CD14-positive monocyte (primary cell): ENCODE measurements at regions of chr1 and their contacts with region 1.

Region 1: GRCh38 chr1:58783993-58784757 is at the start of gene JUN:
- DNase-seq: peak; percentile 99
- H3K4me3 ChIP-seq: peak within 1 kb of the TSS; percentile 80 to 93 (median 85)
- H3K4me3 Mint-ChIP-seq: peak within 1 kb of the TSS; percentile 96 to 99
- H3K27ac ChIP-seq: peak within 1 kb of the TSS; percentile 89 to 97
- H3K27ac Mint-ChIP-seq: peak within 1 kb of the TSS; percentile 95 to 99 (median 97)
- H3K4me1 ChIP-seq: peaks cover 28 to 33% of the 10 kb centered on the region in 2 donors
- H3K4me1 Mint-ChIP-seq: peaks cover 23% of the 10 kb centered on the region
- H3K27me3 ChIP-seq: peaks cover 0 to 58% of the 10 kb centered on the region in 2 donors
- H3K27me3 Mint-ChIP-seq: peaks cover 38 to 72% (median 57%) of the 10 kb centered on the region in 3 donors
- CTCF ChIP-seq: no peak
- polyA plus RNA-seq, gene JUN: 29.3 to 330 (median 31.3) TPM

Region 2: DNA sequence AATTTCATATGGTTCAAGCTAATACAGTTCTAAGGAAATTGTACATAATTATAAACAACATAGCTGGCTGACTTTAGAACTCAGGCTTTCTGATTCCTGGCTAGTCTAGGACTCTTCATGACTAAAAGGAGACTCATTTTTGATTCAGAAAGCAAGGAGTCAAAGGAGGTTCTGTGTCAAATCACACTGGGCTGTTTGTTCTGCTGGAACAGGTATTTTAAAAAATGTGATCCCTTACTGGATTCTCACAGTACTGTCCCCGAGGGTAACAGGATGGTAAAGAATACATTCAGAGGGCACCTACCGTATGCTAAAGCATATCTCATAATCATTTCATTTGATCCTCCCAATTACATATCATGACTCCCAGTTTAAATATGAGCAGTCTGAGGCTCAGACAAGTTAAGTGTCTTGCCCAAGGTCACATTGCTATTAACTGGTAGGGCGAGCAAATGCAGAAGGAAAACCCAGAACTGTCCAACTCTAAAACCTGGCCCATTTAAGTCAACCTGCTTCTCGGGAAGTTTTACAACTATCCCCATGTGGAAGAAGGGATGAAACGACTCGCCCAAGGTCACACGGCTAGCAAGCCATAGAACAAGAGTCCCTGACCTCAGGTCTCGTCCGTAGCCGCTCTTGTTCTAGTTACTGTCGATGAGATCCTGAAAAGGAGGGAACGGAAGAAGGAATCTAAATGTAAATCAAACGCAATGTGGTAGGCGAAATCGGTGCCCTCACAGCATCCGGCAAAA is 85.0 kb before region 1 on chr1:
- intact Hi-C with region 1: loop called in 1 of 2 experiments (anchors 10 kb)
- DNase-seq: peak in 2 of 3 donors; percentile 16 to 22
- H3K4me3 ChIP-seq: peak overlapping the region; percentile 81 to 95 (median 92)
- H3K4me3 Mint-ChIP-seq: peak overlapping the region; percentile 96 to 99
- H3K27ac ChIP-seq: peak overlapping the region; percentile 74 to 98
- H3K27ac Mint-ChIP-seq: peak overlapping the region; percentile 93 to 100 (median 99)
- H3K4me1 ChIP-seq: peaks cover 11 to 14% of the 10 kb centered on the region in 2 donors
- H3K4me1 Mint-ChIP-seq: peaks cover 13% of the 10 kb centered on the region
- H3K27me3 ChIP-seq: no peaks in the 10 kb centered on the region
- H3K27me3 Mint-ChIP-seq: peaks cover 0 to 5% (median 0%) of the 10 kb centered on the region in 3 donors
- CTCF ChIP-seq: no peak

Region 3: DNA sequence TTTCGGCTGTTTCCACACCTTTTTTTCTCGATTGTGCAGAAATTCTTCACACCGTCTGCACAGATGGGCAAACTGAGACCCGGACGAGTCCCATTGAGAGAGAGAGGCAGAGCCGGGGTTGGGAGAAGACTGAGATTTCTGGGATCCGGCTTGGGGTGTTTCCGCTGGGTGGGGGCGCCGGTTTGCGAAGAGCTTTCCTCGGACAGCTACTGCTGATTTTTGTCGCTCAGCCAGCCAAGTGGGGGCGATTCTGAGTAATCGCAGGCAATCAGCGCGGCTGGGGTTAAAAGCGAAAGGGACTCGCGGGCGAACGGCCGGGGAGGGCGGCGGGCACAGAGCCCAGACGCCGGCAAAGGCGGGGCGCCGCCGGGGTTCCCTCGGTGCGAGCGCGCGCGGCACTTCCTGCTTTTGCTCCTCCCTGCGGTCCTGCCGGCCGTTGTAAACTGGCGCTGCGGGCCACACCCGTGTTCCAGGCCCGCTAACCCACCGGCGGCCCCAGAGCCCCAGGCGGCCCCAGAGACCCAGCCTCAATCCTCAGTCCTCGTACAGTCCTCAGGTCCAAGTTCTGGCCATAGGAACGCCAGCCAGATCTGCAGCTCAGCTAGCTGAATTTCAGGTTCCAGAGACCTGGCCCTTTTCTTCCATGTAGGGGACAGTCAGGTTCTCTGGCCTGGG is 32.0 kb after region 1 on chr1:
- intact Hi-C with region 1: loop called in 1 of 2 experiments (anchors 1 kb)
- DNase-seq: peak; percentile 84 to 88 (median 85)
- H3K4me3 ChIP-seq: peak overlapping the region; percentile 73 to 93 (median 84)
- H3K4me3 Mint-ChIP-seq: peak overlapping the region; percentile 89 to 95
- H3K27ac ChIP-seq: peak overlapping the region; percentile 87 to 93
- H3K27ac Mint-ChIP-seq: peak overlapping the region; percentile 89 to 98 (median 96)
- H3K4me1 ChIP-seq: peaks cover 44 to 59% of the 10 kb centered on the region in 2 donors
- H3K4me1 Mint-ChIP-seq: peaks cover 63% of the 10 kb centered on the region
- H3K27me3 ChIP-seq: no peaks in the 10 kb centered on the region
- H3K27me3 Mint-ChIP-seq: no peaks in the 10 kb centered on the region
- CTCF ChIP-seq: no peak

Region 4: GRCh38 chr1:58896246-58897183 is 112.3 kb after region 1 on chr1:
- intact Hi-C with region 1: loop called in 1 of 2 experiments (anchors 5 kb)
- DNase-seq: peak in 1 of 3 donors; percentile 20
- H3K4me3 ChIP-seq: peak overlapping the region in 1 of 3 experiments; percentile 44
- H3K4me3 Mint-ChIP-seq: peak overlapping the region; percentile 48 to 63
- H3K27ac ChIP-seq: peak overlapping the region; percentile 25 to 82
- H3K27ac Mint-ChIP-seq: peak overlapping the region; percentile 74 to 94 (median 90)
- H3K4me1 ChIP-seq: peaks cover 70 to 80% of the 10 kb centered on the region in 2 donors
- H3K4me1 Mint-ChIP-seq: peaks cover 78% of the 10 kb centered on the region
- H3K27me3 ChIP-seq: no peaks in the 10 kb centered on the region
- H3K27me3 Mint-ChIP-seq: peaks cover 0 to 5% (median 2%) of the 10 kb centered on the region in 3 donors
- CTCF ChIP-seq: no peak

Region 5: DNA sequence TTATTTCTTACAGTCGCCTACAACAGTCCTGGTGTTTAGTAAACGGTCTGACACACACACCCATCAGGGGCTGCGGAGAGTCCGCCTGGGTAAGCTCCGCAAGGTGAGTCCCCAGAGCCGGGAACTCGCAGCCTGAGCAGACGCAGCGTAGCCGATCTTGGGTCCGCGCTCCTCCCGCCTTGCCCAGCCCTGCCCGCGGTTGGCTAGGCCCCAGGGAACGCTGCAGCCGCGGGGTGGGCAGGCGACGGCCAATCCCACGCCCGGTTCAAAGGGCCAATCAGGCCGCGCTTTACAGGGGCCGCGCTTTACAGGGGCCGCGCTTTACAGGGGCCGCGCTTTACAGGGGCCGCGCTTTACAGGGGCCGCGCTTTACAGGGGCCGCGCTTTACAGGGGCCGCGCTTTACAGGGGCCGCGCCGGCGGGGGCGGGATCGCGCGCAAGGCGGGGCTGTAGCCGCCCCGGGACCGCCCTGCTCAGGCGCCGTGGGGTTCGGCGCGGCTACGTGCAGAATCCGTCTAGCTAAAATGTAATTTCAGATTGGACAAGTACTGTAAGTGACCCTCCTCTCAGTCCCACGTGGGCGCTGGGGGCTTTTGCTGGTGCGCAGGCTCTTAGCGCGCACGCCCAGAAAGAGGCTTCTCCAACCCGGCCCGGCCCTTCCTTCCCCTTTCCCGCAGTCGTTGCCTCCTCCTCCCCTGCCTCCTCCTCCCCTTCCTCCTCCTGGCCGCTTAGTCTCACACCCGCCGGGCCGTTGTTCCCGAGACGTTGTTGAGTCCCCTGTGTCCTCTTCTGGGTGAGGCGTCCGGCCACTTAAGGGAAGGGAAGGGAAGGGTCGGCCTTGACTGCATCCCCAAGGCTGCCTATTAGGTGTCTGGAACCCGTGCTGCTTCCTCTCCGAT is 512.4 kb after region 1 on chr1 and contains the start of gene FGGY:
- intact Hi-C with region 1: loop called (anchors 5 kb)
- DNase-seq: peak; percentile 98 to 99 (median 99)
- H3K4me3 ChIP-seq: peak within 1 kb of the TSS; percentile 50 to 90 (median 85)
- H3K4me3 Mint-ChIP-seq: peak within 1 kb of the TSS; percentile 79 to 90
- H3K27ac ChIP-seq: peak within 1 kb of the TSS; percentile 95 to 99
- H3K27ac Mint-ChIP-seq: peak within 1 kb of the TSS; percentile 96 to 99 (median 97)
- H3K4me1 ChIP-seq: peaks cover 42 to 48% of the 10 kb centered on the region in 2 donors
- H3K4me1 Mint-ChIP-seq: peaks cover 45% of the 10 kb centered on the region
- H3K27me3 ChIP-seq: no peaks in the 10 kb centered on the region
- H3K27me3 Mint-ChIP-seq: peaks cover 0 to 3% (median 0%) of the 10 kb centered on the region in 3 donors
- CTCF ChIP-seq: no peak
- polyA plus RNA-seq, gene FGGY: 2.3 to 4.3 (median 2.9) TPM